Testis (tissue), 5 donors: ENCODE measurements at regions of chr19 and their contacts with region 1.

Region 1: DNA sequence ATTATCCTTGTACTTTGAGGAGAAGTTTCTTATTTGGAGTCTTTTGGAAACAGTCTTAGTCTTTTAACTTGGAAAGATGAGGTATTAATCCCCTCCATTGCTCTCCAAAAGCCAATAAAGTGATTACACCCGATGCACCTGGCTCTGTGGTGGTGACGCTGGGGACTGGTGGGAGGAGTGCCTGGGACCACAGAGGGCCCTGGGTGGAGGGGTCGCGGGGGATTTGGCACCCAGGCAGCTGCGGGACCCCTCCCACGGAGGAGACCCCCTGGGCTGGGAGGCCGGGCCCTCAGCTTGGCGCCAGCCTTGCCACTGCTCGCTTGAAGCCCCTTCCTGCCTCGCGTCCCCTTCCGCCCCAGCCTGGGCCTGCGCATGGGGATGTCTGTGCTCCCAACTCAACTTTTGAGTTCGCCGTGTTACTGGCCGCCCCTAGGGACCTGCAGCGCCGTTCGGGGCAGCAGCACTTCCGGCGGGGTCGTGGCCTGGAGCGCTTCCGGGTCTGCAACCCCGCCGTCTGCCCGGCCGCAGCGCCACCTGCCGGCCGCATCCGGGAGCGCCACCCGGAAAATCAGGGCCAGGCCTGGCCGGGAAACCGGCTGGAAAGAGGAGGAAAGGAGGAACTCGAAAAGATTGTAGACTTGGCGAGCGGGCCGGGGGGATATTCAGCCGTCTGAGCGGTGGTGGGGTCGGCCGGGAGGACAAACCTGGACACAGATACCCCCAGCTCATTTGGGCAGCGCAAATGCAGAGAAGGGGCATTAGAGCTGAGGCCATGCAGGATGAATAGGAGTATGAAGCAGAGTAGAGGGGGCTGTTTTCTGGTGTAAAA is 8.4 kb downstream of the PEAK3 start:
- DNase-seq: peak; percentile 78
- H3K4me3 ChIP-seq: peak overlapping the region in 1 of 2 donors; percentile 29
- H3K27ac ChIP-seq: peak overlapping the region; percentile 29 to 72
- H3K4me1 ChIP-seq: peaks cover 59% of the 10 kb centered on the region
- H3K27me3 ChIP-seq: no peaks in the 10 kb centered on the region
- CTCF ChIP-seq: peak; percentile 97 to 99 (median 98)
- POLR2A ChIP-seq: no peak

Region 2: DNA sequence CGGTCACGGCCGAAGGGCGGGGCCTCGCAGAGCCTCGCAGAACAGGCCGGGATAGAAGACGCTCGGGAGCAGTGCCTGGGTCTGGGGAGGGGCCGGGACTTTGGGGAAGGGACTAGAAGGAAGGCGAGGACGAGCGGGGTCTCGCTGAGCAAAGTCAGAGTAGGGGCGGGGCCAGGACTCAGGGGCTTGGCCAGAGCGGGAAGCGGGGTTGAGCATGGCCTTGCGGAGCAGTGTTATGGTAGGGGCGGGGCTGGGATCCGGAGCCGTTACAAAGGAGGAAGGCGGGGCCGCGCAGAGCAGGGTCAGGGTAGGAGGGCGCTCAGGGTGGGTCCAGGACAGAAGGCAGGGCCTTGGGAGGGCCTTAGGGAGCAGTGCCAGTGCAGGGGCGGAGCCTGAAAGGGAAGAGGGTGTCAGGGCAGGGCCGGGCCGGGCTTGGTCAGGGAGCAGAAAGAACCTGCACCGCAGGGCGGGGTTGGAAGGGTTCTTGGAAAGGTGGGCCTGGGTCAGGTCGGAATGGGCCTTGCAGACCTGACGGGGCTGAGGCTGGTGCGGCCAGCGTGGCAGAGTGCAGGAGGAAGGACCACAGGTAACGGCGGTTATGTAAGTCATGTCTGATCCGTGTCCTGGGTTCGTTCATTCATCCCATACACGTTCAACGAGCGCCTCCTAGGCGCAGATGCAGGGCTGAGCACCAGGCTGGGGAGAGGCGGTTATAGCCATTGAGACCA is 460.9 kb before region 1 on chr19:
- intact Hi-C with region 1: no loop called
- DNase-seq: peak; percentile 96
- H3K4me3 ChIP-seq: peak overlapping the region; percentile 19 to 62
- H3K27ac ChIP-seq: peak overlapping the region; percentile 14 to 33
- H3K4me1 ChIP-seq: peaks cover 13% of the 10 kb centered on the region
- H3K27me3 ChIP-seq: no peaks in the 10 kb centered on the region
- CTCF ChIP-seq: peak in 2 of 3 experiments; percentile 1 to 24
- POLR2A ChIP-seq: no peak

Region 3: DNA sequence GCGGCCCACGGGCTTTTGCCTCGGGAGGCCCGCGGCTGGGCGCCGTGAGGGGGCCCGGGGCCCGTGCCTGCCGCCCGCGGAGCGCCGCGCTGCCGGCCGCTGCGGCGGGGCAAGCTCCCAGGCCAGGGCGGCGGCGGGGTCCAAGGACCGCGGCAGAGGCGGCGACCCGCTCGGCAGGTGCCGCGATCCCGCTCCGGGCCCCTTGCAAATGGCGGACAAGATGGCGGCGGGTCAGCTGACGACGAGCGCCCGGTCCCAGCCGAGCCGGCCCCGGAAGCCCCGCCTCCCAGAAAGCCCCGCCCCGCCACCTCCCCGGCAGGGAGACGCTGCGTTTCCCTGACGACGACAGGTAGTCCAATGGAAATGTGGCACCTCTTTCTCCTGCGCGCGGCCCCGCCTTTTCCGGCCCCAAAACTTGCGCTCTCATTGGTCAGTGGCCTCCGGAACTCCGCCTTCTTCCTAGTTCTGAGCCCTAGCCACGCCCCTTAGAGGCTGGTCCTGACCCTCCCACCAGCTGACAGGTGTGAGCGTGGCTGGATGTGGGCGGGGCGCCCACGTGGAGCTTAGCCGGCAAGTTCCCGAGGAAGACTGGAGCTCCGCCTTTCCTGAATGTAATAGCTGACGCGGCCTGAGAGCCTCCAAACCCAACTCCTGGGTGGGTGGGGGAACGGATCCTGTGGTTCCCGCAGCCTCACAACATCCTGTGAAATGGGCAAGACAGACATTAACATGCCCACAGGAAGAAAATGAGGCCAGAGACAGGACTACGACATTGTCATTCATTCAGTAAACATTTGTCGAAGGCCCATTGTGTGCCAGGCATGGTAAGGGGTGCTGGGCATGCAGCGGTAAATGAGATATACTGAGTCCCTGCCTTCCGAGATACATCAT is 122.0 kb before region 1 on chr19 and contains the start of gene AP3D1:
- intact Hi-C with region 1: loop called (anchors 10 kb)
- DNase-seq: peak; percentile 100
- H3K4me3 ChIP-seq: peak within 1 kb of the TSS; percentile 93 to 96
- H3K27ac ChIP-seq: peak within 1 kb of the TSS; percentile 75 to 84
- H3K4me1 ChIP-seq: peaks cover 16% of the 10 kb centered on the region
- H3K27me3 ChIP-seq: no peaks in the 10 kb centered on the region
- CTCF ChIP-seq: no peak
- POLR2A ChIP-seq: no peak
- total RNA-seq, gene AP3D1: 201 to 204 TPM

Region 4: GRCh38 chr19:2199215-2199614 is 74.4 kb before region 1 on chr19:
- intact Hi-C with region 1: no loop called
- DNase-seq: no peak
- H3K4me3 ChIP-seq: no peak overlapping the region
- H3K27ac ChIP-seq: no peak overlapping the region
- H3K4me1 ChIP-seq: no peaks in the 10 kb centered on the region
- H3K27me3 ChIP-seq: no peaks in the 10 kb centered on the region
- CTCF ChIP-seq: no peak
- POLR2A ChIP-seq: no peak

Region 5: DNA sequence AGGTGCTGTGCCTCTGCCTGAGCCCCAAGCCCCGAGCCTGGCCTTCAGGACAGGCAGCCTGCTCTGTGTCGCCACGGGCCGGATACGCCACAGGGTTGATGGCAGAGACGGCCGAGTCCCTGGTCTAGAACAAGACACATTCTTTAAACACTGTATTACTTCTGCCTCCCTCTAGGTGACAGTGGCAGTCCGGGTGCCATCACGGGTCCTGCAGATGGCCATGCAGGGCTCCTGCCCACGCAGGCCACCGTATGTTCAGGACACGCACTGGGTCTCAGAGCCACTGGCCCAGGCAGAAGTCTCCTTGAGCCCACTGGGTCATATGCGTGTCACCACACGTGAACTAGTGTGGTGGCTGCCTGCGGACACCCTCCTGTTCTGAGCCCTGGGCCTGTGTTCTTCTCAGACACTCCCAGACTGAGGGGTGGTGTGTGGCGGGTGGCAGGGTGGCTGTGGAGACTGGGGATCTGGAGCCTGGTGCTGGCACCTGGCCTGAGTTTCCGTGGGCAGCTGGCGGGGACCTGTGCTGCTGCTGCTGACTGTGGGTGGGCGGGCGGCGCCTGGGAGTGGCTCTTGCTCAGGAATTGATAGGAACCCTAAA is 41.8 kb before region 1 on chr19:
- intact Hi-C with region 1: loop called (anchors 5 kb)
- DNase-seq: peak; percentile 63
- H3K4me3 ChIP-seq: no peak overlapping the region
- H3K27ac ChIP-seq: peak overlapping the region in 1 of 2 donors; percentile 64
- H3K4me1 ChIP-seq: peaks cover 21% of the 10 kb centered on the region
- H3K27me3 ChIP-seq: no peaks in the 10 kb centered on the region
- CTCF ChIP-seq: peak; percentile 17 to 49 (median 26)
- POLR2A ChIP-seq: no peak

Region 6: GRCh38 chr19:2391118-2391725 is 117.7 kb after region 1 on chr19:
- intact Hi-C with region 1: loop called (anchors 10 kb)
- DNase-seq: peak; percentile 43
- H3K4me3 ChIP-seq: no peak overlapping the region
- H3K27ac ChIP-seq: no peak overlapping the region
- H3K4me1 ChIP-seq: no peaks in the 10 kb centered on the region
- H3K27me3 ChIP-seq: no peaks in the 10 kb centered on the region
- CTCF ChIP-seq: peak; percentile 73 to 87 (median 80)
- POLR2A ChIP-seq: no peak